Activated T-helper 2 cell treated with anti-CD3 and anti-CD28 coated beads, Interferon-gamma antibody, Interleukin-2, Interleukin-4, amounts not matched to agents 10 μg/mL and 5 μg/mL and 100 μg/mL, durations not matched to agents 14 hours and 24 hours and 36 hours (primary cell): ENCODE measurements at regions of chr1 and their contacts with region 1.

Region 1: DNA sequence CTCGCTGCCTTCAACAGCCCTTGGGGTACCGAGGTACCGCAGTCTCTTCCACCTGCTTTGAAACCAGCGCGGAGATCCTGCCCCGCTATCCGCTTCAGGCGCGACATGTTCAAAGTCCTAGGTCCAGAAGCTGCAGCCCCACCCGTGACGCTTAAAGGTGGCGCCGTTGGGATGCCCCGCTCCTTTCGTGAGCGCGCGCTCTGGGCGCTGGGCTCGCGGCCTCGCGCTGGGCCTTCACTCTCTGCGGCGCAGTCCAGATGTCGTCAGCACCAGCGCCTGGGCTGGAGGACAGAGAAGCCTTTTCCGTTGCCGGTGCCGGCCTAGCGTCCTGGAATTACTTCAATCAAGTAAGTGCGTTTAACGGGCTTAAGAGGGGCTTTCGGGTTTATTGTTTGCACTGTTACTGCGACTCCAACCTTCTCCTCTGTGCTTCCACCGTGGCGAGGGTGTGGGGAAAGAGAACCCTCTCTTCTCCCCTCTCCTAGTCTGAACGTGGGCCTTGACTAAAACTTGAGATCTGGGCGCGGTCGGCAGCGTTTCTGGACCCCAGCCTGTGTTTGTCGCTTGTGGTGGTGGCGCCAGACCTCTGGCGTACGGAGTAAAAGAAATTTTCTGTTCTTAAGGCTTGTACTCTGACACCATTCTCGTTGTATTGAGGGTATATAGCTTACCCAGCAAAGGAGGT is at the start of gene LRRC40:
- DNase-seq: peak; percentile 94
- H3K4me3 Mint-ChIP-seq: peak within 1 kb of the TSS; percentile 99
- H3K27ac Mint-ChIP-seq: peak within 1 kb of the TSS; percentile 99
- H3K4me1 Mint-ChIP-seq: peaks cover 49% of the 10 kb centered on the region
- H3K27me3 Mint-ChIP-seq: no peaks in the 10 kb centered on the region
- total RNA-seq, gene LRRC40: 23.3 and 23.4 TPM in 2 replicates

Region 2: GRCh38 chr1:70143048-70143659 is 62.4 kb before region 1 on chr1:
- intact Hi-C with region 1: no loop called
- DNase-seq: no peak
- H3K4me3 Mint-ChIP-seq: no peak overlapping the region
- H3K27ac Mint-ChIP-seq: no peak overlapping the region
- H3K4me1 Mint-ChIP-seq: no peaks in the 10 kb centered on the region
- H3K27me3 Mint-ChIP-seq: no peaks in the 10 kb centered on the region

Region 3: GRCh38 chr1:70169018-70169839 is 36.3 kb before region 1 on chr1:
- intact Hi-C with region 1: loop called (anchors 2 kb)
- DNase-seq: no peak
- H3K4me3 Mint-ChIP-seq: no peak overlapping the region
- H3K27ac Mint-ChIP-seq: no peak overlapping the region
- H3K4me1 Mint-ChIP-seq: peaks cover 10% of the 10 kb centered on the region
- H3K27me3 Mint-ChIP-seq: no peaks in the 10 kb centered on the region

Region 4: DNA sequence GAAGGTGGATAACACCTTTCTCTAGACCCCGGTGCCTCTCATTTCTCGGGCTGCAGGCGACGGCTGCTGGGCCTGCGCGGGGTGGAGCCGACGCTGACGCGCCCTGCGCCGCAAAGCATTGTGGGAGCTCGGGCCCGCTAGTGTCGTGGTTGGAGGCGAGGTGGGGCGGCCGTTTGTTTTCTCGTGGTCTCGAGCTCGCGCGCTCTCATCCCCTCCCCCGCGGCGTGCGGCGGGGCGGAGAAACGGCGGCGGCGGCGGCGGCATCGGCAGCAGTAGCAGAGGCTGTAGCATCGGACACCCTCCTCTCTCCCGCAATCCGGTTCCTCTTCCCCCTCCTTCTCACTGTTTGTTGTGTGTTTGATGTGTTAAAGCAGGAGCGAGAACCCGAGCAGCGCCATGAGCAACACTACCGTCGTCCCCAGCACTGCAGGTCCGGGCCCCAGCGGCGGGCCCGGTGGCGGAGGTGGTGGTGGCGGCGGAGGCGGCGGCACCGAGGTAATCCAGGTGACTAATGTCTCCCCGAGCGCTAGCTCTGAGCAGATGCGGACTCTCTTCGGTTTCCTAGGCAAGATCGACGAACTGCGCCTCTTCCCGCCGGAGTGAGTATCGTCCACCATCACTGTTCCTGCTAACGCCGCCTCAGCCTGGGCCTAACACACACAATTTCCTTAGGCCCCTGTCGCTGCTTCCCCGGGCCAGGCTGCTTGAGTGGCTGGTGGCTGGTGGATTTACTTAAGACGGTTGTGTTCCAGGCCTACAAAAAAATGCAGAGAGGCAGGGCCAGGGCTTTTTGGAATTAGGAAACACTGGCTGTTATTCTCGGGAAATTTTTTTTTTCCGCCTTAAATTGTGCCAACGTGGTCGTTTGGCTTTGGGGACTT is 15.9 kb after region 1 on chr1 and contains the start of gene SRSF11:
- intact Hi-C with region 1: loop called (anchors 1 kb)
- DNase-seq: peak; percentile 95
- H3K4me3 Mint-ChIP-seq: peak within 1 kb of the TSS; percentile 93
- H3K27ac Mint-ChIP-seq: peak within 1 kb of the TSS; percentile 97
- H3K4me1 Mint-ChIP-seq: peaks cover 35% of the 10 kb centered on the region
- H3K27me3 Mint-ChIP-seq: no peaks in the 10 kb centered on the region
- total RNA-seq, gene SRSF11: 194 and 195 TPM in 2 replicates

Region 5: GRCh38 chr1:70247768-70248167 is 42.2 kb after region 1 on chr1:
- intact Hi-C with region 1: loop called (anchors 2 kb)
- DNase-seq: no peak
- H3K4me3 Mint-ChIP-seq: no peak overlapping the region
- H3K27ac Mint-ChIP-seq: peak overlapping the region; percentile 43
- H3K4me1 Mint-ChIP-seq: peaks cover 38% of the 10 kb centered on the region
- H3K27me3 Mint-ChIP-seq: no peaks in the 10 kb centered on the region

Region 6: DNA sequence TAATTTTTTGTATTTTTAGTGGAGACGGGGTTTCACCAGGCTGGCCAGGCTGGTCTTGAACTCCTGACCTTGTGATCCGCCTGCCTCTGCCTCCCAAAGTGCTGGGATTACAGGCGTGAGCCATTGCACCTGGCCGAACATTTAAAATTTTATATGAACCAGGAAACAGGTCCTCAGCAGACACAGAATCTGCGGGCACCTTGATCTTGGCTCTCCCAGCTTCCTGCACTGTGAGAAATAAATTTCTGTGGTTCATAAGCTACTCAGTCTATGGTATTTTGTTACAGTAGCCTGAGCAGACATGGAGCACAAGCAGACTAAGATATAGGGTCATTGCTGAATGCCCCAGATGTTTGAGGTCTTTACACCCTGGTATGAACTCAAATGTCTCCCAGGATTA is 181.9 kb after region 1 on chr1:
- intact Hi-C with region 1: no loop called
- DNase-seq: no peak
- H3K4me3 Mint-ChIP-seq: no peak overlapping the region
- H3K27ac Mint-ChIP-seq: no peak overlapping the region
- H3K4me1 Mint-ChIP-seq: peaks cover 3% of the 10 kb centered on the region
- H3K27me3 Mint-ChIP-seq: peaks cover 20% of the 10 kb centered on the region

Region 7: GRCh38 chr1:71080739-71081696 is 875.4 kb after region 1 on chr1 and contains the start of gene ZRANB2:
- intact Hi-C with region 1: loop called (anchors 1 kb)
- DNase-seq: peak; percentile 85
- H3K4me3 Mint-ChIP-seq: peak within 1 kb of the TSS; percentile 98
- H3K27ac Mint-ChIP-seq: peak within 1 kb of the TSS; percentile 100
- H3K4me1 Mint-ChIP-seq: peaks cover 16% of the 10 kb centered on the region
- H3K27me3 Mint-ChIP-seq: peaks cover 14% of the 10 kb centered on the region
- total RNA-seq, gene ZRANB2: 131 and 135 TPM in 2 replicates